Posterior vena cava (tissue), 2 donors: ENCODE measurements at regions of chr18 and their contacts with region 1.

Region 1: GRCh38 chr18:46660955-46661749 is 4.1 kb upstream of the LOXHD1 start:
- DNase-seq: no peak

Region 2: GRCh38 chr18:46133534-46133933 is 527.6 kb before region 1 on chr18:
- intact Hi-C with region 1: loop called in 1 of 2 experiments (anchors 5 kb)
- DNase-seq: no peak

Region 3: GRCh38 chr18:46148810-46149209 is 512.3 kb before region 1 on chr18:
- intact Hi-C with region 1: loop called (anchors 1 to 5 kb)
- DNase-seq: no peak

Region 4: GRCh38 chr18:46173393-46174341 is 487.5 kb before region 1 on chr18:
- intact Hi-C with region 1: loop called in 1 of 2 experiments (anchors 10 kb)
- DNase-seq: peak; percentile 98

Region 5: DNA sequence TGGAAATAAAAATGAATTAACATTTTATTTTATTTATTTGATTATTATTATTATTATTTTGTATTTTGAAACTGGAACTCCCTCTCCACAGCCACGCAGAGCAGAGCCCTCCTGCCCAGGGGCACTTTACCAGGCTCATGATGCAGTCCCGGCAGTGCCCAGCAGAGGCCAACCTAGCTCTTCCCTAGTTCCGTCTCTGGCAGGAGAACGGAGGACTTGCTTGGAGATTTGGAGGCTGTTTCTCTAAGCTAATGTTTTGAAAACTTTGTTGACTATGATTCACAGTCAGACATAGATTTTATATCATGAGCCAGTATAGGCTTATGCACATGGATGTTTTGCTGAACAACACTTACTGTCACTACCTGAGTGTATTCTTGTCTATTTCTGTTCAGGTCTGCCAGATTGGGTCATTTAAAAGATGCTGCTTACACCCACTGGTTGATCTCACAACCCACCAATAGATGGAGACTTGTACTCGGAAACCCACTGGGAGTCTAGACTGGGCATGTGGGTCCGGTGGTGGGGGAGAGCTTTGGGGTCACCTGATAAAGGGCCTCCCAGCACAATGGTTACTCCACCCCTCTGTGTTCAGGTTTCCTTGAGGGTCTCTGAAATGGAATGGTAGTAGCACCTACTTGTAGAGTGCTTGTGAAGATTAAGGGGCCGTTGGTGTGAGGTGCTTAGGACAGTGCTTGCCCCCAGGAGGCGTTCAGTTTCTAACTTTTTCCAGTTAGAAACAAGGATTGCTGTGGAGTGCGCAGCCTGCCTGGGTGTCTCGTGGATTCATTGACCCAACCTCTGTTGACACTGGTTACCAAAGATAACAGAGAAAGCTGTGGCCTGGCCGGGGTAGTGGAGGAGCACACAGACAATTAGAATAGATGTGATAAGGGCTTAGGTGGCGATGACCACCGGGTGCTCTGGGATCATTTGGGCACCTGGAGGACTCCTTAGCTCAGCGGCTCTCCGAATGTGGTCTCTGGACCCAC is 379.7 kb before region 1 on chr18:
- intact Hi-C with region 1: loop called (anchors 5 kb)
- DNase-seq: peak; percentile 86